Naive thymus-derived CD4-positive, alpha-beta T cell (primary cell): ENCODE measurements at regions of chr7 and their contacts with region 1.

Region 1: GRCh38 chr7:24979863-24980533 is at the start of gene OSBPL3:
- DNase-seq: peak; percentile 86 to 96 (median 93)
- ATAC-seq: peak; percentile 95
- H3K4me3 ChIP-seq: peak within 1 kb of the TSS; percentile 84
- H3K4me3 Mint-ChIP-seq: peak within 1 kb of the TSS; percentile 93 to 97 (median 96)
- H3K27ac ChIP-seq: peak within 1 kb of the TSS; percentile 69
- H3K27ac Mint-ChIP-seq: peak within 1 kb of the TSS; percentile 73 to 95 (median 89)
- H3K4me1 ChIP-seq: peaks cover 26 to 32% of the 10 kb centered on the region in 2 donors
- H3K4me1 Mint-ChIP-seq: peaks cover 40 to 65% (median 56%) of the 10 kb centered on the region in 7 donors
- H3K27me3 ChIP-seq: no peaks in the 10 kb centered on the region
- H3K27me3 Mint-ChIP-seq: peaks cover 0 to 4% (median 0%) of the 10 kb centered on the region in 5 donors
- total RNA-seq, gene OSBPL3: 17.1 to 75.7 (median 22.7) TPM

Region 2: GRCh38 chr7:24757353-24758275 is 222.4 kb before region 1 on chr7 and contains the start of gene GSDME:
- CTCF ChIA-PET with region 1: no interaction called
- POLR2A ChIA-PET with region 1: no interaction called
- intact Hi-C with region 1: loop called in 1 of 2 experiments (anchors 1 kb)
- DNase-seq: peak in 7 of 9 donors; percentile 10 to 67 (median 14)
- ATAC-seq: peak; percentile 73
- H3K4me3 ChIP-seq: peak within 1 kb of the TSS; percentile 46
- H3K4me3 Mint-ChIP-seq: peak within 1 kb of the TSS; percentile 74 to 94 (median 84)
- H3K27ac ChIP-seq: no peak within 1 kb of the TSS
- H3K27ac Mint-ChIP-seq: peak within 1 kb of the TSS in 3 of 9 donors; percentile 11 to 43 (median 38)
- H3K4me1 ChIP-seq: peaks cover 5 to 10% of the 10 kb centered on the region in 2 donors
- H3K4me1 Mint-ChIP-seq: peaks cover 9 to 30% (median 24%) of the 10 kb centered on the region in 7 donors
- H3K27me3 ChIP-seq: peaks cover 3 to 7% of the 10 kb centered on the region in 2 donors
- H3K27me3 Mint-ChIP-seq: peaks cover 42 to 67% (median 53%) of the 10 kb centered on the region in 5 donors
- total RNA-seq, gene GSDME: 0.42 to 5.0 (median 0.92) TPM

Region 3: DNA sequence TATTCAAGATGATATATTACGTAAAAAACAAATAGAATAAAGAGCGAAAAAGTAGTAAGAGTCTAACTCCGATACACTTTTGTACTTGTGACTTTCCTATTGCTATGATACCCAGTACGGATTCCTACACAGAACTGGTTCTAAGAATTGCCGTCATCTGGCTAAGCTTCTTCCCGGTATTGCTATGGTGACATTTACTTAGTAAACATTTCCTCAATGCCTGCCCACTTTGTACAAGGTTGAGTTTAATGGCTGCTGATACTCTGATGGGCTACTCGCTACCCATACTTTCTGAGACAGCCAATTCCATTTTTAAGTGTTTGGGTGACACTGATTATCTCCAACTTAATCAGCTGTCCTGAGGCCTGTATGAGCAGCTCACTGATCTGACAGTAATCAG is 55.6 kb before region 1 on chr7:
- CTCF ChIA-PET with region 1: no interaction called
- POLR2A ChIA-PET with region 1: interaction called, 3 read pairs
- intact Hi-C with region 1: loop called in 1 of 2 experiments (anchors 1 kb)
- DNase-seq: peak in 1 of 9 donors; percentile 10
- ATAC-seq: peak; percentile 54
- H3K4me3 ChIP-seq: no peak overlapping the region
- H3K4me3 Mint-ChIP-seq: peak overlapping the region in 1 of 10 donors; percentile 73
- H3K27ac ChIP-seq: no peak overlapping the region
- H3K27ac Mint-ChIP-seq: peak overlapping the region in 1 of 9 donors; percentile 91
- H3K4me1 ChIP-seq: peaks cover 0 to 16% of the 10 kb centered on the region in 2 donors
- H3K4me1 Mint-ChIP-seq: peaks cover 23 to 89% (median 37%) of the 10 kb centered on the region in 7 donors
- H3K27me3 ChIP-seq: no peaks in the 10 kb centered on the region
- H3K27me3 Mint-ChIP-seq: no peaks in the 10 kb centered on the region

Region 4: DNA sequence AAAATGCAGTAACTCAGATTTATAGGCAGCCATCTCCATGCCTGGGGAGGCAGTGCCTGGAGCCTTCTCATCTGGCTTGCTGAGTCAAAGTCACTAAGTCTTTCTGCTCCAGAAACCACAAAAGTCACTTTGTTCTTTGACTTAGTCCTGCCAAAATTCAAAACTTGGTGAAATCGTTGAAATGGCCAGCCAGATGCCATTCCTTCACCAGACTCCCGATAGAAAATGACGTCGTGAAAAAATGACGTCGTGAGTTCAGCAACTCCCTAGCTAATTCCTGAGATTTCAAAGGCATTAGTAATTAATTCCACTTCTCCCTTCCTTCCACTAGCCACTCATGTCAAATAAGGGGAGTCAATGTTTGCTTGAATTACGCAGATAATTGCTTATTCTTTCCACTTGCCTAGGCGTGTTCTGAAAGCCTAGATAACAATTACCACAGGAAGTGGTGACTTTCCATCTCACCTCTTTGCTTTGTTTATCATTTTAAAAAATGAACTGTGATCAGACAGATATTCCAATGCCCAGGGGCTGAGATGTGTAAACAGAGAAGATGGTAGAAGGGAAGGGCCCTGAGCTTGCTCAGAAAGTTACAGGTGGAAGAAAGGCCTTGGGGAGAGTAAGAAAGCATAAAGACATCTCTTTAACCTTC is 48.5 kb after region 1 on chr7:
- CTCF ChIA-PET with region 1: interaction called, 4 read pairs
- POLR2A ChIA-PET with region 1: interaction called, 5 read pairs
- intact Hi-C with region 1: loop called (anchors 1 kb)
- DNase-seq: peak in 8 of 9 donors; percentile 10 to 64 (median 48)
- ATAC-seq: peak; percentile 75
- H3K4me3 ChIP-seq: peak overlapping the region; percentile 17
- H3K4me3 Mint-ChIP-seq: peak overlapping the region in 9 of 10 donors; percentile 10 to 88 (median 67)
- H3K27ac ChIP-seq: peak overlapping the region; percentile 25
- H3K27ac Mint-ChIP-seq: peak overlapping the region; percentile 66 to 93 (median 89)
- H3K4me1 ChIP-seq: peaks cover 23 to 32% of the 10 kb centered on the region in 2 donors
- H3K4me1 Mint-ChIP-seq: peaks cover 21 to 40% (median 27%) of the 10 kb centered on the region in 7 donors
- H3K27me3 ChIP-seq: no peaks in the 10 kb centered on the region
- H3K27me3 Mint-ChIP-seq: peaks cover 0 to 11% (median 0%) of the 10 kb centered on the region in 5 donors

Region 5: DNA sequence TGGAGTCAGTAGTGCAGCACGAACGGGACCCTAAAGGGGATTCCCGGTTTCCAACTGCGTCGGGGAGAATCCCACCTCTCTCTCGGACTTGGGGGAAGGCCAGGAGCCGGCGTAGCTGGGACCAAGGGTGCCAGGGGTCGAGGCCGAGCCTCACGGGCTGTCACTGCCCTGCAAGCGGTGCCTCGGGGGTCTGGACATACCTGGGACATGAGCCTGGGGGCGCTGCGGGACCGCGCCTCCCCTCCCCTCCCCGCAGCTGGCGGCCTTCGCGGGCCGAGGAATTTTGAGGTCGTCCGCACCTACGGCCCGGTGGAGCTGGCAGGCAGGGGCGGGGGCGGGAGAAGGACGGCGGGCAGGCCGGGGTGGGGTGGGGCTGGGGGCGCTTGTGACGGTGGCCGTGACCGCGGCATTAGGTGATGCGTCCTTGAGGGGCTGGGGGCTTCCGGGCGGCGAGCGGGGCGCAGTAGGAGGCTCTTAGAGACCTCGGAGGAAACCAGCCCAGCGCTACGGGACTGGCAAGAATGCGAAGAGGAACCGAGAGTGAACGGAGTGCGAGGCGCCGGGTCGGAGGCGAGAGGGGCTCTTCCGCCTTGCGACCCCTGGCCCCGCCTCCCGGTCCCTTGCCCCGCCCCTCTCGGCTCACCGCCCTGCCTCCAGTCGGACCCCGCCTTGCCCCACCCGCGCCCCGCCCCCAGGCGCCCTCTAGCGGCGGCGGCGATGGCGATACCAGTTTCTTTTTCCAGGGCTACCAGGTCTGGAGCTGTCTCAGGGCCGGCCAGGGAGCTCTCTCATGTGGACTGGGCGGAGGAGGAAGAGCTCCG is 200.0 kb after region 1 on chr7:
- CTCF ChIA-PET with region 1: no interaction called
- POLR2A ChIA-PET with region 1: no interaction called
- intact Hi-C with region 1: loop called (anchors 1 kb)
- DNase-seq: peak; percentile 88 to 99 (median 94)
- ATAC-seq: peak; percentile 99
- H3K4me3 ChIP-seq: peak overlapping the region; percentile 75
- H3K4me3 Mint-ChIP-seq: peak overlapping the region; percentile 82 to 93 (median 88)
- H3K27ac ChIP-seq: peak overlapping the region; percentile 86
- H3K27ac Mint-ChIP-seq: peak overlapping the region; percentile 83 to 96 (median 92)
- H3K4me1 ChIP-seq: peaks cover 6 to 7% of the 10 kb centered on the region in 2 donors
- H3K4me1 Mint-ChIP-seq: peaks cover 13 to 31% (median 22%) of the 10 kb centered on the region in 7 donors
- H3K27me3 ChIP-seq: no peaks in the 10 kb centered on the region
- H3K27me3 Mint-ChIP-seq: peaks cover 0 to 12% (median 0%) of the 10 kb centered on the region in 5 donors